Heart left ventricle (tissue), 16 donors: ENCODE measurements at regions of chr5 and their contacts with region 1.

Region 1: DNA sequence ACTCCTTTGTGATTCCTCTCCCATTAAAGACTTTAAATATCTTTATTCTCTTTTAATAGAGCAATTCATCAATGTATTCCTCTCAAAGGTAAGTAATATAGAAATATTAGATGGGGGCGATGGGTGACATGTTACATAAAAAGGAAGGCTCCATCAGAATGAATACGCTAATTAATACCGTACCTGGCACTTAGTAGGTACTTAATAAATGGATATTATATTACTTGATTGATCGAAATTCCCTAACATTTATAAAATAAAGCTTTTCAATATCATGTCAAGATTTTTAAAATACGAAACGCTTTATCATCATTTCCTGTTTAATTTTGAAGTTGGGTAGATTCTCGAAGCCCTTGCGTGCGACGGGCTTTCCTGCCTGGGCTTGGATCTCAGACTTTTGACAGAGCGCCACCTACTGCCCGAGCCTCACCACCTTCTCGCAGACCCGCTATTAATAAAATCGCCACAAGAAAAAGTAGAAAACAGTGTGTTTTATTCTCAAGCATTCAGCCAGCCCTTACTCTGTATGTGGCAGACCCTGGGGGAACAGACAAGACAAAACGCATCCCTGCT is 99.4 kb downstream of the C5orf15 start:
- DNase-seq: peak; percentile 66 to 80 (median 71)
- ATAC-seq: peak; percentile 47 to 88 (median 76)
- H3K4me3 ChIP-seq: peak overlapping the region in 11 of 12 donors; percentile 12 to 51 (median 40)
- H3K27ac ChIP-seq: peak overlapping the region in 6 of 12 donors; percentile 10 to 54 (median 24)
- H3K4me1 ChIP-seq: peaks cover 0 to 15% (median 7%) of the 10 kb centered on the region in 12 donors
- H3K27me3 ChIP-seq: peaks cover 0 to 4% (median 0%) of the 10 kb centered on the region in 9 donors
- CTCF ChIP-seq: peak; percentile 53 to 90 (median 82)
- POLR2A ChIP-seq: no peak

Region 2: DNA sequence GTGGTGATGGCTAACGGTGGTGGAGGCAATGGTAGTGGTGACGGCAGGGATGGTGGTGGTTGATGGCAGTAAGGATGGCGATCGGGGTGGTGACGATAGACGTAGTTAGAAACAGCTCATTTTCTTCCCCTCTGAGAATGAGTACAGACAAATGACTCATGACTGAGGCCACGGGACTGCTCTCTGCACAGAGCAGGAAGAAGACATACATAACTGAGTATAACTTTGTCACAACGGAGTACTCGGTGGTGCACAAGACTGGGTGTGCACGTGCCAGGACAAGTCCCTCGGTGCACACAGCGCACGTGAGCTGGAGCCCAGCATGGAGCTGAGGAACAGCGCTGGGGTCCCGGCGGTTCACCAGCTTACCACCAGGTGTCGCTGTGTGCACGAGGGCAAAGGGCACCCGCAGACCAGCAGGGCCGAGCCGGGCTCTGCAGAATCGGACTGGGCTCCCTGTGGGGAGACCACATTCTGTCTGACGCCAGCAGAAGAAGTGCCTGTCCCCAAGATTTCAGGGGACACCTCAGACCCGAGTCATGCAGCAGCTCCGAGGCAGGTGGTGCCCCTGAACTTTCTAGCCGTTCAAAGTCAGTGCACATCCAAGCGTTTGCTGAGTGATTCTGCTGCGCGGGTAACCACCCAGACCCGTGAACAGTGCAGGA is 445.3 kb before region 1 on chr5:
- intact Hi-C with region 1: loop called (anchors 2 to 10 kb)
- DNase-seq: peak; percentile 38 to 84 (median 65)
- ATAC-seq: peak; percentile 50 to 89 (median 79)
- H3K4me3 ChIP-seq: no peak overlapping the region
- H3K27ac ChIP-seq: no peak overlapping the region
- H3K4me1 ChIP-seq: peaks cover 0 to 5% (median 0%) of the 10 kb centered on the region in 12 donors
- H3K27me3 ChIP-seq: peaks cover 0 to 16% (median 0%) of the 10 kb centered on the region in 9 donors
- CTCF ChIP-seq: peak; percentile 80 to 95 (median 92)
- POLR2A ChIP-seq: no peak

Region 3: GRCh38 chr5:133754575-133755169 is 114.4 kb before region 1 on chr5:
- intact Hi-C with region 1: loop called in 7 of 10 experiments (anchors 1 to 10 kb)
- DNase-seq: peak in 1 of 5 donors; percentile 13
- ATAC-seq: peak in 3 of 4 donors; percentile 60 to 69 (median 62)
- H3K4me3 ChIP-seq: no peak overlapping the region
- H3K27ac ChIP-seq: no peak overlapping the region
- H3K4me1 ChIP-seq: no peaks in the 10 kb centered on the region
- H3K27me3 ChIP-seq: peaks cover 0 to 30% (median 6%) of the 10 kb centered on the region in 9 donors
- CTCF ChIP-seq: peak; percentile 30 to 64 (median 49)
- POLR2A ChIP-seq: no peak

Region 4: DNA sequence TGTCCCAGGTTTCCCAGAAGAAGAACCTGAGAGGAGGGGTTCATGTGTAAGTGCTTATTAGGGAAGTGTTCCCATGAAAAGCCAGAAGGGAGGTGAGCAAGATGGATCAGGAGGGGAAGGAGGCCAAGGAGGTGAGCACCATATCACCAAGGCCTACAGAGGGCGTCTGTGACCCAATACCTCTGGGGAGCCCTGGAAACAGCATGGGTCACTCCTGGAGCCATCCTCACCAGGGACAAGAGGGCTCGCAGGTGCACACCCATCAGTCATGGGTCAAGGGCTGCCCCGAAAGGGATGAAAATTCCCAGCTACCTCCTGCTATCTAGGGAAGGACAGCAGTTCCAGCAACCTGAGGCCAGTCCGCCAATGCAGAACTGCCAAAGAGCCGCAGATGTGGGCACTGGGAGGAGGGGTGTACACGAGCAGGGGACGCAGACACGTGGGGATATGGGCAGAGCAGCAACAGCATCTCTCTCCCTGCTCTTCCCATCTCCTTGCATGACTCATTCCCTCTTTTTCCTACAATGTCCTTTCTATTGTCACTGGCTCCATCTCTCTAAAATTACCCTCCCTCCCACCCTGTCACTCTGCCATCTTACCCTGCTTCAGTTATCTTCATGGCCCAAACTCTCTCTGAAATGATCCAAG is 89.1 kb before region 1 on chr5:
- intact Hi-C with region 1: loop called in 1 of 10 experiments (anchors 5 kb)
- DNase-seq: no peak
- ATAC-seq: peak; percentile 30 to 52 (median 37)
- H3K4me3 ChIP-seq: no peak overlapping the region
- H3K27ac ChIP-seq: peak overlapping the region in 4 of 12 donors; percentile 13 to 57 (median 34)
- H3K4me1 ChIP-seq: peaks cover 0 to 4% (median 0%) of the 10 kb centered on the region in 12 donors
- H3K27me3 ChIP-seq: no peaks in the 10 kb centered on the region
- CTCF ChIP-seq: no peak
- POLR2A ChIP-seq: no peak

Region 5: GRCh38 chr5:134073404-134073803 is 204.4 kb after region 1 on chr5:
- intact Hi-C with region 1: no loop called
- DNase-seq: no peak
- ATAC-seq: no peak
- H3K4me3 ChIP-seq: no peak overlapping the region
- H3K27ac ChIP-seq: no peak overlapping the region
- H3K4me1 ChIP-seq: peaks cover 0 to 10% (median 7%) of the 10 kb centered on the region in 12 donors
- H3K27me3 ChIP-seq: peaks cover 0 to 22% (median 0%) of the 10 kb centered on the region in 9 donors
- CTCF ChIP-seq: no peak
- POLR2A ChIP-seq: no peak